Calu3 (cell line): ENCODE measurements at regions of chr12 and their contacts with region 1.

Region 1: DNA sequence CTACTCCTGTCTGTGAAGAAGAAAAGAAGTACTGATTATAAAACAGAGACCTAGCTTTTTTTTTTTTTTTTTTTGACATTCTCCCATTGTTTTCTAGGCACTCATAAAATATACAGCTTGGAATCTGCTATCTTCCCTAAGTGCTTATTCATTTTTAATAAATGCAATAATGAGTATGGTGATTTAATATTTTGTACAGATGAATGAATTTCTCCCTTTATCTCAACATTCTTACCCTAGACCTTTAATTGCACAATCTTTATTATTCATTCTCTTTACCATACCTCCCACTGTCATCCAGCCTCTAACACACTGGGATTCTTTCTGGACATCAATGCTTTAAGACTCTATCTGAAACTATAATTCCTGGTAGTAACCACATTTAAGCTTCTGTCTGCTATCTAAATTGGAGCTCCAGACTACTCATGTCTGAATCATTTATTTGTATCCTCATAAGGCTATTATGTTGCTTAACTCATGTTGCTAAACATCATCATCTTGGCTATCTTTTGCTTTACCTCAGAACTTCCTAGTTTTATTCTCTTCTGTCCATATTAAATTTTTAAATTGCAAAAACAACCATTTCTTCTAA is 270.2 kb downstream of the ALG10B start:
- DNase-seq: no peak
- H3K4me3 Mint-ChIP-seq: no peak overlapping the region
- H3K27ac Mint-ChIP-seq: no peak overlapping the region
- H3K4me1 Mint-ChIP-seq: no peaks in the 10 kb centered on the region
- H3K27me3 Mint-ChIP-seq: no peaks in the 10 kb centered on the region
- CTCF ChIP-seq: no peak

Region 2: DNA sequence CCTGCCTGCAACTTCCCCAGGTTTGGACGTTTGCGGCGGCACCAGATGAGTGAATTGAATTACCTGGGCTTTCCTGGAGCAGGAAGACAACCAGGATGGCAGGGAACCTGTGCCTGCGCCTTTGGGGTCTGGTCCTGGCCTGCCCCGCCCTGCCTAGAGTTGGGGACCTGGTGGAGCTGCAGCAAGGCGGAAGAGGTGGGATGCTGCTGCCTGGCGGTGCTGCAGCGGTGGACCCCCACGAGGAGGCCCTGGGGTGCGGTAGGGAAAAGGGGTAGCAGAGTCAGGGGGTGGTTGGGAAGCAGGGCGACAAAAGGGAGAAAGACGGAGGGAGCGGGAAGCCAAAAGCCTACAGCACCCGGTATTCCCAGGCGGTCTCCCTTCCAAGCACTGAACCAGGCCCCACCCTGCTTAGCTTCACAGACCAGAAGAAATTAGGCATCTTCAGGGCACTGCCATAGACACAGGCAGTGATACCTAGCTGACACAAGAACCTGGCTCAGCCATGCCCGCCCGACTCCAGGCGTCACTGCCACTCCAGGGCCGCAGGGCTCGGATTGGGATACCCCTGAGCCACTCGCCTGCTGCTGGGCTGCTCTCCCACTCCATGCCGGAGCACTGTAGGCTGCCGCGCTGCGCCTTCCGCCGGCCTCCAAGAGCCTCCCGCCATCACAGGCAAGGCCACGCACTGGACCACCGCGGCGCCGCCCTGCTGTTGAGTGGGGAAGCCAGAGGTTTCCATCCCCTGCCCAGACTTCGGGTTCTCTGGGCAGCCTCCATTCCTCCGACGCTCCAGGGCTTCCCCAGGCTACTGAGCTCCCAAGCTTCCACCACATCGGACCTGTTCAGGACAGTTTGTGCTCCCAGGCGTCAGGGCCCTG is 425.4 kb before region 1 on chr12:
- CTCF ChIA-PET with region 1: no interaction called
- intact Hi-C with region 1: no loop called
- DNase-seq: no peak
- H3K4me3 Mint-ChIP-seq: no peak overlapping the region
- H3K27ac Mint-ChIP-seq: no peak overlapping the region
- H3K4me1 Mint-ChIP-seq: no peaks in the 10 kb centered on the region
- H3K27me3 Mint-ChIP-seq: no peaks in the 10 kb centered on the region
- CTCF ChIP-seq: no peak

Region 3: DNA sequence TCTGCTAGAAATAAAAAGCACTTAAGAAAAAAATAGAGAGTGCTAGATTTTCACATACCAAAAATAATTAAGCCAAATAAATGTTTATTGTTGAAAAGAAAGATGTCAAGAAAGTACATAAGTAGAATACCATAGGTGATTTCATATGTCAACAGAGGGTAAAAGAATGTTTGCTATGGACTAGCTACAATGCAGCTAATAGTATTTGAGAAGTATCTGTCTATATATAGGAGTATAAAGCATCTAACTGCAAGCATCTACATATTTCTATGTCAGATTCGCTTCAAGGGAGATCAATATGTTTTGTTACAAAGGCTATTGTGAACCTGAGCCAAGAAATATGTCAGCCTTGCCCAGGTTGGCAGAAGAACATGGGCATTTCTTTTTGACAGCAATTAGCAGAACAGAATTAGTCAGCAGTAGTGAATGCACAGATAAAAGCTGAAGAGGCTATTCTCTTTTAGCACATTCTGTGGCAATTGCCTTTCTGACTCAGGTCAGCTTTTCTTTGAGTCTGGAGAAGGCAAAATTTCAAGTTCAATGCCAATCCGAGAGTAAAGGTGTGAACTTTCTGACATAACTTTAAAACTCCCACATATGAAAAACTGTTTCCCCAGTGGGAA is 130.1 kb before region 1 on chr12:
- CTCF ChIA-PET with region 1: no interaction called
- intact Hi-C with region 1: loop called (anchors 10 kb)
- DNase-seq: no peak
- H3K4me3 Mint-ChIP-seq: no peak overlapping the region
- H3K27ac Mint-ChIP-seq: no peak overlapping the region
- H3K4me1 Mint-ChIP-seq: no peaks in the 10 kb centered on the region
- H3K27me3 Mint-ChIP-seq: no peaks in the 10 kb centered on the region
- CTCF ChIP-seq: no peak

Region 4: GRCh38 chr12:38527631-38528030 is 59.1 kb before region 1 on chr12:
- CTCF ChIA-PET with region 1: no interaction called
- intact Hi-C with region 1: loop called (anchors 10 kb)
- DNase-seq: no peak
- H3K4me3 Mint-ChIP-seq: no peak overlapping the region
- H3K27ac Mint-ChIP-seq: no peak overlapping the region
- H3K4me1 Mint-ChIP-seq: no peaks in the 10 kb centered on the region
- H3K27me3 Mint-ChIP-seq: no peaks in the 10 kb centered on the region
- CTCF ChIP-seq: no peak

Region 5: DNA sequence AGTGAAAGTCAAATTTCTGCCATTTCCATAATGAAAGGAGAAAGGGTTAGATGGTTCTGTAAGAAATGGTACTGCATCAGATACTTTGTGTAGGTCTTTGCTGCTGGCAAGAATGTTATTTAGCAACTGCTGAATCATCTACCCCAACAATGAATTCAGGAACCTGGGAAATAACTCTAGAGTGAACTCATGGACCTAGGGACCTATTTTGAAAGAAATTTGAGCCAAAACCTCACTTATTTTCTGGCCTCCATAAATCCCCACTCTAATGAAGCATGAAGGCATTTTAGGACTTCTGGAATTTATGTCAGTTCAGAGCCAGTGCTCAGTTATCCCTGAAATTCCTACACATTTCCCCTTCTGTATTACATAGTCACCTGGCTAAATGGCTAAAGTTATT is 369.6 kb after region 1 on chr12:
- CTCF ChIA-PET with region 1: no interaction called
- intact Hi-C with region 1: no loop called
- DNase-seq: no peak
- H3K4me3 Mint-ChIP-seq: no peak overlapping the region
- H3K27ac Mint-ChIP-seq: no peak overlapping the region
- H3K4me1 Mint-ChIP-seq: no peaks in the 10 kb centered on the region
- H3K27me3 Mint-ChIP-seq: no peaks in the 10 kb centered on the region
- CTCF ChIP-seq: no peak